Vagina (tissue), 2 donors: ENCODE measurements at regions of chr3 and their contacts with region 1.

Region 1: GRCh38 chr3:186259612-186260383 is 102.2 kb downstream of the DGKG start:
- DNase-seq: no peak
- H3K4me3 ChIP-seq: no peak overlapping the region
- H3K27ac ChIP-seq: no peak overlapping the region
- H3K4me1 ChIP-seq: peaks cover 9% of the 10 kb centered on the region
- H3K27me3 ChIP-seq: no peaks in the 10 kb centered on the region
- CTCF ChIP-seq: peak in 2 of 3 experiments; percentile 36 to 47
- POLR2A ChIP-seq: no peak

Region 2: DNA sequence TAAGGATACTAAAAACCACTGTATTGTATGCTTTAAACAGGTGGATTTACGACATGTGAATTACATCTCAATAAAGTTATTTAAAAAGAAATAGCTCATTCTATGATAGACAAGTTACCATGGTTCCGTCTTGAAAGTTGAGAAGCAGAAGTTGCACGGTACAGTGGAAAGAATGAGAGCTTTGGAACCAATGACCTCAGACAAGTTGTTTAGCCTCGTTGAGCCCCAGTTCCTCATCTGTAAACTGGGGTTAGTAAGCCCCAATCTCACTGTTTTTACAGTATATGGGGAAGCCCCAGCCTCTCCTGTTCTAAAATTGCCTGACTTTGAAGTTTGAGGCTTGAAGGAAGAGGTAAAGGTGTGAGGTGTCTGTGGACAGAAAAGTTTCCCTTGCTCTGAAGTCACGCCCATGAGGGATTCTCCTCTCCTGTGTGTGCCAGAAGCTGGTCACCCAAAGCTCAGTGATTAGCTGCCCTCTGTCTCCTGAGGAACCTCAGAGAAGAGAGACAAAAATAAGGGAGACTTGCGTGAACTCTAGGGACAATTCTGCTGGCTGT is 274.4 kb after region 1 on chr3:
- intact Hi-C with region 1: loop called (anchors 10 kb)
- DNase-seq: no peak
- H3K4me3 ChIP-seq: no peak overlapping the region
- H3K27ac ChIP-seq: no peak overlapping the region
- H3K4me1 ChIP-seq: no peaks in the 10 kb centered on the region
- H3K27me3 ChIP-seq: no peaks in the 10 kb centered on the region
- CTCF ChIP-seq: no peak
- POLR2A ChIP-seq: no peak